Dendritic cell treated with granulocyte-macrophage colony-stimulating factor and Interleukin-4, amounts not matched to agents 40 ng/mL and 50 ng/mL, for 4 days (primary cell): ENCODE measurements at regions of chr7 and their contacts with region 1.

Region 1: GRCh38 chr7:23055582-23056178 is 41.8 kb upstream of the HYCC1 start:
- H3K4me3 Mint-ChIP-seq: no peak overlapping the region
- H3K27ac Mint-ChIP-seq: no peak overlapping the region
- H3K4me1 Mint-ChIP-seq: no peaks in the 10 kb centered on the region
- H3K27me3 Mint-ChIP-seq: peaks cover 1% of the 10 kb centered on the region

Region 2: GRCh38 chr7:22559829-22560489 is 495.7 kb before region 1 on chr7:
- intact Hi-C with region 1: loop called (anchors 10 kb)
- H3K4me3 Mint-ChIP-seq: no peak overlapping the region
- H3K27ac Mint-ChIP-seq: no peak overlapping the region
- H3K4me1 Mint-ChIP-seq: peaks cover 32% of the 10 kb centered on the region
- H3K27me3 Mint-ChIP-seq: peaks cover 40% of the 10 kb centered on the region

Region 3: DNA sequence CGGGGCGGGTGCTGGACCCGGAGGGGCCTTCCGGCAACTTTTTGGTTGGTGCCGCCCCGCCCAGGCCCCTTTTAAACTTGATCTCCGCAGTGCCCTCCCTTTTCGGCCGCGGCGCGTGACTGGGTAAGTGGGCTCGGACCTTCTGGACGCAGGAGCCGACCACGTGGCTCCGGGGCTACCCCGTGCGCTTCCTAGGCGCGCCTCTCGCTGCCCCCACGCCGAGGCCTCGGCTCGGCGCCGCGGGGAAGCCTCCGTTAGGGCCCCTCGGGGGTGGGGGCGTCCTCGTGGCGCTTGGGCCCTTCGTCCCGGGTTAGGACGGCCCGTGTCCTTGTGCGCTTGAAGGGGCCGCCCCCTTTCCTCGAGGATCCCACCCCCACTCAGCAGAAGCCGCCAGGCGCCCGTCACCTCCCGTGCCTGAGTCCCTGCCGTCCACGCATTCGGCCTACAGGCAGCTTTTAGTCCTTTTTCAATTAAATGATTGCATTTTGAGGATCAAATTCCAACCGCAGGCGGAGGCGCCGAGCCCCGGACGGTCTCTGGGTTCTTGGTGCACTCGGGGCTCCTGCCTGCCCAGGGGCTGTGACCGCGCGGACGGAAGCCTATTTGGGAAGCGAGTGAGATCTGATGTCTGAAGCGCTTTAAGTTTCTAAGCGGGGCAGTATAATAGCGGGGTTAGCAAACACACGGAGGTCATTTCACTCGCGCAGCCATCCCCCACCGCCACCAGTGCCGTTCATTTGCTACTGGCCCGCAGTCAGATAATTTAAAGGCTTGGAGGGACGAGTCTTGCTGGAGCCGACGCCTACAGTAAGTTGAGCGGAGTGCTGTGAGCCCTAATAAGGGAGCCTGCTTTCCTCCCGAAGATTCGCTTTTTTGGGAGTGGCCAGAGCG is 201.3 kb before region 1 on chr7:
- intact Hi-C with region 1: loop called (anchors 2 kb)
- H3K4me3 Mint-ChIP-seq: peak overlapping the region; percentile 94
- H3K27ac Mint-ChIP-seq: peak overlapping the region; percentile 93
- H3K4me1 Mint-ChIP-seq: peaks cover 5% of the 10 kb centered on the region
- H3K27me3 Mint-ChIP-seq: peaks cover 4% of the 10 kb centered on the region

Region 4: GRCh38 chr7:22992874-22993840 is 62.5 kb before region 1 on chr7:
- intact Hi-C with region 1: loop called (anchors 5 kb)
- H3K4me3 Mint-ChIP-seq: no peak overlapping the region
- H3K27ac Mint-ChIP-seq: peak overlapping the region; percentile 43
- H3K4me1 Mint-ChIP-seq: peaks cover 36% of the 10 kb centered on the region
- H3K27me3 Mint-ChIP-seq: no peaks in the 10 kb centered on the region

Region 5: GRCh38 chr7:23013715-23014649 is 41.7 kb before region 1 on chr7 and contains the start of gene HYCC1:
- intact Hi-C with region 1: loop called (anchors 2 kb)
- H3K4me3 Mint-ChIP-seq: peak within 1 kb of the TSS; percentile 91
- H3K27ac Mint-ChIP-seq: no peak within 1 kb of the TSS
- H3K4me1 Mint-ChIP-seq: peaks cover 41% of the 10 kb centered on the region
- H3K27me3 Mint-ChIP-seq: no peaks in the 10 kb centered on the region